CD14-positive monocyte (primary cell): ENCODE measurements at regions of chr16 and their contacts with region 1.

Region 1: GRCh38 chr16:56700195-56700594 is 17.9 kb downstream of the MT1X start:
- DNase-seq: no peak
- H3K4me3 ChIP-seq: no peak overlapping the region
- H3K4me3 Mint-ChIP-seq: no peak overlapping the region
- H3K27ac ChIP-seq: no peak overlapping the region
- H3K27ac Mint-ChIP-seq: no peak overlapping the region
- H3K4me1 ChIP-seq: no peaks in the 10 kb centered on the region
- H3K4me1 Mint-ChIP-seq: peaks cover 12% of the 10 kb centered on the region
- H3K27me3 ChIP-seq: no peaks in the 10 kb centered on the region
- H3K27me3 Mint-ChIP-seq: peaks cover 5 to 10% (median 6%) of the 10 kb centered on the region in 3 donors
- CTCF ChIP-seq: no peak

Region 2: DNA sequence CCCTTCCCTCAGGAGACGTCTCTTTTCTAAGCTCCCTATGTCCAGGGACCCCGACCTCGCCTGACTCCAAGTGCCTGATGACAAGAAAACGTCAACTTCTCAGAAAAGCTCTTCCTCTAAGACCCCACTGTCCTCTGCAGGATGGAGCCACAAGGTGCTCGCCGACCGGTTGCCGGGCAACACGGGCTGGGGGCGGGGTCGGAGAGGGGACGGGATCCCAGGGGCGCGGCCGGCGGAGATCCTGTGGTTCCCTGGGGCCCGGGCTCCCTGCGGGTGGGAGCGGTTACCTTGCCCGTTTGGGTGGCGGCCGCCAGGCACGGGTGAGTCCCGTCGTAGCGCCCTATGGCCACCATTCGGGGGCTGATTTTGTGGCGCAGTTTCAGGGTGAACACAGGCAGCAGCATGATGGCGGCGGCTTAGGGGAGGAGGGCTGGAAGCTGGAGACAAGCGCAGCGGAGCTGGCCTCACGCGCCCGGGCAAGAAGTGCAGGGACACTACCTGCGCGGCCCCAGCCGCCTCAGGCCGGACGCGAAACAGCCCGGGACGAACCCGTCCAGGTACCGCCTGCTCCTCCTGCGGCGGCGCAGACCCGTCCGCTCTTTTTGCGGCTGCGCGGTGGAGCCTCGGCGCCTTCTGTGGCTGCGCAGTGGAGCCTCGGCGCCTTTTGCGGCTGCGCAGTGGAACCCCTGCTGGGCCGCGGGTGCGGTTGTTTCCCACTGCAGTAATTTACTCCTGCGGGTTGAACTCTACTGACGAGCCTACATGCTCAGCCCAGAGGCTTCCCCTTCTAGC is 180.5 kb before region 1 on chr16 and contains the start of gene BBS2:
- intact Hi-C with region 1: loop called (anchors 5 kb)
- DNase-seq: peak; percentile 72 to 82 (median 80)
- H3K4me3 ChIP-seq: peak within 1 kb of the TSS; percentile 76 to 99 (median 96)
- H3K4me3 Mint-ChIP-seq: peak within 1 kb of the TSS; percentile 85 to 88
- H3K27ac ChIP-seq: peak within 1 kb of the TSS; percentile 43 to 76
- H3K27ac Mint-ChIP-seq: peak within 1 kb of the TSS; percentile 54 to 92 (median 78)
- H3K4me1 ChIP-seq: peaks cover 10 to 16% of the 10 kb centered on the region in 2 donors
- H3K4me1 Mint-ChIP-seq: peaks cover 18% of the 10 kb centered on the region
- H3K27me3 ChIP-seq: no peaks in the 10 kb centered on the region
- H3K27me3 Mint-ChIP-seq: peaks cover 0 to 2% (median 0%) of the 10 kb centered on the region in 3 donors
- CTCF ChIP-seq: no peak
- polyA plus RNA-seq, gene BBS2: 16.6 to 35.5 (median 18.8) TPM

Region 3: DNA sequence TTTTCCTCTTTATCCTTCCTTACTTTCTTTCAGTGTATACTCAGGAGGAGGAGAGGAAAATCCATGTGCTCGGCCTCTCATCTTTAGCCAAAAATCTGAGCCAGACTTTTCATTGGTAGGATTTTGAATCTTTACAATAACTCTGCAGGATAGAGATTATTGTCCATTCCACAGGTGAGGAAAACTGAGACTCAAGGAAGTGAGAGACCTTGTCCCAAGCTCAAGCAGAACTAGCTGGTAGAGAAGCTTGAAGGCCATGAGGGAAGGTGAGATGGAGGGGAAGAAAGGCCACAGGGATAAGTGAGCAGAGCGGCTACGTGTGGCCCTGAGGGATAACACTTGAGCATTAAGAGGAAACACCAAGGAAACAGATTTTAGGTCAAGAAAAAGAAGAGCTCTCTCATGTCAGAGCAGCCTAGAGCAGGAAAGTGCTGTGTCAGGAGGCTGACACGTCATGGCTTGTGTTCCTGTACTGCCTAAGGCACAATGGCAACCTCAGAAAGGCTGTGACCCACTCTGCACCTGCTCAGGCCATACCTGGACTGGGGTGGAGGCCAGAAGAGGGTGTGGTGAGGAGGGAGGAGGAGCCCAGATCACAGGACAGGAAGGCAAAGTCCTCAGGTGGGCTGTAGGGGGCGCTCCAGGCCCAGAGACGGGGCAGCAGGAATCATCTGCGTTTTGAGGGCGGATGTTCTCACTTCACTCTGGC is 123.5 kb before region 1 on chr16:
- intact Hi-C with region 1: loop called (anchors 2 to 5 kb)
- DNase-seq: peak; percentile 51 to 65 (median 59)
- H3K4me3 ChIP-seq: no peak overlapping the region
- H3K4me3 Mint-ChIP-seq: no peak overlapping the region
- H3K27ac ChIP-seq: no peak overlapping the region
- H3K27ac Mint-ChIP-seq: peak overlapping the region in 1 of 7 donors; percentile 52
- H3K4me1 ChIP-seq: no peaks in the 10 kb centered on the region
- H3K4me1 Mint-ChIP-seq: no peaks in the 10 kb centered on the region
- H3K27me3 ChIP-seq: no peaks in the 10 kb centered on the region
- H3K27me3 Mint-ChIP-seq: peaks cover 5 to 11% (median 6%) of the 10 kb centered on the region in 3 donors
- CTCF ChIP-seq: peak; percentile 78